ENCODE measurements at regions of chr9 and their contacts with region 1.

Region 1: GRCh38 chr9:137642118-137642601 is 23.4 kb downstream of the EHMT1 start:
- DNase-seq: peak; percentile 37

Region 2: DNA sequence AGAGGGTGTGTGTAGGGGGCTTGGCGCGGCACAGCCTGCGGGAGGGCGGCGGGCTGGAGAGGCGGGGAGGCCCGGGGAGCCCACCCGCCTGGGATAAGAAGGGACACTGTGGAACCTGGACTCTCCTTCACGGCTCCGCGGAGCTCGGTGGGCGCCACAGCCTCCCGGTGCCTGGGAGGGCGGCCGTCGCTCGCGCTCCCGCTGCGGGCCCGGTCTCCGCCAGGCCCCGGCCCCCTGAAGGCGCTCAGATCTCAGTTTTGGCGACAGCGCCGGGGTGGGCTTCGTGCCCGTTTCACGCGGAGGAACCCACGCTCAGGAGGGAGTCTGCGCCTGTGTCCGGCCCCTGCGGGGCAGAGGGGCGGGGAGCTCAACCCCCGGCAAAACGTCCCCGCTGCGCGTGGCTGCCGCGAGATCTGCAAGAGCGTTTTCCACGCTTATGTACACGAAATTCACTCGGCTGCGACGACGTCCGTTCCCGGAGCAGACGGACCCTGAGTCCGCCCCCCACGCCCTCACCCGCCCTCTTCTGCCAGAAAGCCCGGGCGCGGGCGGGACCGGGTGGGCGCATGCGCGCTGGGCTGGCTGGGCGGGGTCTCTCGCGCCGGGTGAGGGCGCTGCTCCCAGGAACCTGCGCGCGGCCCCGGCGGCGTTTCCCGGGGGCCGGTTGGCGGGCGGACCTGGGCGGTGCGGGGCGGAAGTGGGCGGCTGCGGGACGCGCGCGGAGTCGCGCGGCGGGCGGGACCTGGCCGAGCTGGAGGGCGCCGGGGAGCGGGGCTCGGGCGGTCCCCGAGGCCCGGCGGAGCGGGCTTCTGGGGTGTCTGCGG is 387.3 kb before region 1 on chr9 and contains the start of gene NELFB:
- intact Hi-C with region 1: no loop called
- DNase-seq: peak; percentile 98
- total RNA-seq, gene NELFB: 33.3 to 36.7 TPM

Region 3: DNA sequence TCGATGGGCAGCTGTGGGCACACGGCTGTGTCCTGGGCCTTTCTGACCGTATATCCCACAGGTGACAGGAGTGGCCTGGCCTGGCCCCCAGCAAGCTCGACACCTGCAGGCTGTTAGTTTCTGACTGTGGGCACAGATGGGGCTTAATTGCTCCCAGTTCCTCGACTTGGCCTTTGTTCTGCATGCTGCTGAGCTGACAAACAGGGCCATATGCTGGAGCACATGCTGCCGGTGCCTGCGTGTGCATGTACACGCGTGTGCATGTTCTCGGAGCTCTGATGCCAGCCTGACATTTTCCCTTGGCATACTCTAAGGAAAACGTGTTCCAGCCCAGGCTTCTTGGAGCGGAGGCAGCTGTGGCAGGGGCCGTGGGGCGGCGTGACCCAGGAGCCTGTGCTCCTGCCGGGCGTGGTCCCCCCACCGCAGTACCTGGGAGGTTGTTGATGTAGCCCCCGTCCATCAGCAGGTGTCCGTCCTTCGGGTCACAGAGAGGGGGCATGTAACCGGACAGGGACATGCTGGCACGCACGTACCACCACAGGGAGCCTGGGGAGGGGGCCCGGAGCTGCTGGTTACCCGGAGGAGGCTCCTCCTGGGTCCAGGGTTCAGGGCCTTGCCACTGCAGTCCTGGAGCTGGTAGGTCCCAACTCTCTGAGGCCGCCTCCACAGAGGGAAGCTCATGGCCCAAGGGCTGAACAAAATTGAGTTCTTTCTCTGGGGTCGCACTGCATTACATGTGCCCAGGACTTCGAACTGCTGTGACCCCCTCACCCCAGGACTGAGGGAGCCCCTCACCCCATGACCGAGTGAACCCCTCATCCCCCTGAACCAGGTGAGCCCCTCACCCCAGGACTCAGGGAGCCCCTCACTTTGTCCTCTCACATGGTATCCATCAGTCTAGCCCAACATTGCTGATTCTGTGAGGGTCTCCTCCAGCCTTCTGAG is 178.9 kb before region 1 on chr9:
- intact Hi-C with region 1: no loop called
- DNase-seq: peak; percentile 62

Region 4: DNA sequence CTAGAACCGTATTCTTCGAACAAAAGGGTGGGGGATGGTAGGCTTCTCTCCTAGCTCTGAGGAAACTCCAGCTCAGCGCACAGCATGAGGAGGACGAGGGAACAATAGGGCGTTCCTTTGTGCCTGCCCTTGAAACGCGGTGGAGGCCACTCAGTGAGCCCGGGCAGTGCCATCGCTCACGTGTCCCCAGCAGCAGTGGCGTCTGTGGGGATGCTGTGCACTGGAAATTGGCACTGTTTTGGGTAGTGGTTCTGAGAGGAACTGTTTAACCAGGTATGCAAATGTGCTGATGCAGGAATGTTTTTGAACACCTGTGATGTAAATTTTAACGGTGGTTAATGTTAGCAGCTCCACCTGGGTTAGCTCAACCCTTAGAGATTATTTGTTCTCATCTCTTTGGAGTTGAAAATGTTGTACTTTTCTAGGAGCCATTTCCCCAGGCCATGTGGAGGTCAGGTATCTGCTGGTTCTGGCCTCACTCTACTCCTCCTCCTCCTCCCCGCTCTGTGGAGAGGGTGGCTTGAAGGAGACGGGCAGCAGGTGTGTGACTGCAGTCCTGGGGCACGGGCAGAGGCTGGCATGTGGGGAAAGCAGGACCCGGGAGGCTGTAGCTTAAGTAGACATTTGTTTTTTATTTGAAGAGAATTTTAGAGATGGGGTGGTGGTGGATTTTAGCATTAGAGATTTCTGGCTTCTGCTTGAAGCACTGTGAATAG is 25.0 kb after region 1 on chr9:
- intact Hi-C with region 1: loop called in 1 of 2 experiments (anchors 1 kb)
- DNase-seq: peak; percentile 66

Measured in posterior vena cava (tissue), 2 donors.